IMR-90 (cell line): ENCODE measurements at regions of chr20 and their contacts with region 1.

Region 1: DNA sequence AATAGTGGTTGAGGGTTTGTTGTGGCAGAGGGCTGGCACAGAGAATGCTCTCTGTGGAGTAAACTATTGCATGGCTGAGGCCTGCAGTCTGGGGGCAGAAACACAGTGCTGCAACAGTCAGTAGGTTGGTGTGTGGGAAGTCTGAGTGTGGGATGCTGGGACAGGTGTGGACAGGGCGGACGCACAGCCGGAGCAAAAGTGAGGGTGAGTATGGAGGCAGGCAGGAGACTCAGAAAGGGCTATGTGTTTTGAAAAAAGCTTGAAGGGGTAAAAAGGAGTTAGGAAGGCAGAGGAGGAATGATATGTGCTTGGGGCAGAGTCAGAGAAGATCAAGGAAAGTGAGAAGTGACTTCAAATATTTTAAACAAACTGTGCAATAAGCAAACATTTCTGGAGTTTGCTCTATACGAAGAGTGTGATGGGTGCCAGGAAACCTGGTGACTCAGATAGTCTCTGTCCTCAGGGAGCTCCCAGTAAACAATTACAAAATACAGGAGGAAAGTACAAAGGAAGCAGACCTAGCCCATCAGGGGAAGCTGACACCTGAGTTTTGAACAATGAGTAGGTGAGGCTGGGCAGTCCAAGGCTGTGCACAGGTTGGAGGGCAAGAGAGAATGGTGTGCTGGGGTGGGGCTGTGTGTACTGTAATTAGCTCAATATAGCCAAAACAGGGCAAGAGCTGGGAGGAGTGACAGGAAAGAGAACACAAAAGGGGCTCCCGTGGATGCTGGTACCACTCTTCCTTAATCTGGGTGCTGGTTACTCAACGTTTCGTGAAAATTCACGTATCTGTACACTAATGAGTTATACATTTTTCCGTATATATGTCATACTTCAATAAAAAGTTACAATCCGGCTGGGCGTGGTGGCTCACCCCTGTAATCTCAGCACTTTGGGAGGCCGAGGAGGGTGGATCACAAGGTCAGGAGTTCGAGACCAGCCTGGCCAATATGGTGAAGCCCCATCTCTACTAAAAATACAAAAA is 55.2 kb downstream of the PIGU start:
- DNase-seq: peak; percentile 64
- ATAC-seq: peak; percentile 81
- H3K4me3 ChIP-seq: no peak overlapping the region
- H3K27ac ChIP-seq: no peak overlapping the region
- H3K4me1 ChIP-seq: peaks cover 6% of the 10 kb centered on the region
- H3K27me3 ChIP-seq: no peaks in the 10 kb centered on the region
- CTCF ChIP-seq: no peak
- POLR2A ChIP-seq: no peak
- RAD21 ChIP-seq: no peak

Region 2: GRCh38 chr20:34516247-34517113 is 105.2 kb before region 1 on chr20 and contains the start of gene DYNLRB1:
- CTCF ChIA-PET with region 1: no interaction called
- POLR2A ChIA-PET with region 1: no interaction called
- dilution Hi-C with region 1: no loop called
- in situ Hi-C with region 1: no loop called
- intact Hi-C with region 1: no loop called
- DNase-seq: peak; percentile 96
- ATAC-seq: peak; percentile 89
- H3K4me3 ChIP-seq: peak within 1 kb of the TSS; percentile 89
- H3K27ac ChIP-seq: peak within 1 kb of the TSS; percentile 95
- H3K4me1 ChIP-seq: peaks cover 7% of the 10 kb centered on the region; the same call in 1 of the 2 replicates
- H3K27me3 ChIP-seq: no peaks in the 10 kb centered on the region
- CTCF ChIP-seq: no peak
- POLR2A ChIP-seq: peak; percentile 90
- RAD21 ChIP-seq: no peak
- total RNA-seq, gene DYNLRB1: 78.0 and 82.4 TPM in 2 replicates

Region 3: DNA sequence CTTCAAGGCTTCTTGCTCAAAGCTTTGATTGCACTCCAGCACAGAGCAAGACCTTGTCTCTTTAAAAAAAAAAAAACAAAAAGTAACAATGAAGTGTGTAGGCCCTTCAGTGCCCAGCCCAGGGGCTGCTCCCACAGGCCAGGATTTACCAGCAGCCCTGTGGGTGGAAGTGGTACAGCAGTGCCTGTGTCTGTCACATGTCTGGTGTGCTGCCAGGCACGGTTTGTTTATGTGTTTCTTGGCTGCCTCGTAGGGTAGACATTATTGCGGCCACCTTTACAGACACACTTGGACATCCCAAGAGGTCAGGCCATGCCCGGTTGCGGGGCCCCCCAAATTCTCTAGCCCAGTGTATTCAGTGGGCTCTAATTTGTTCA is 92.8 kb before region 1 on chr20:
- CTCF ChIA-PET with region 1: no interaction called
- POLR2A ChIA-PET with region 1: no interaction called
- dilution Hi-C with region 1: no loop called
- in situ Hi-C with region 1: no loop called
- intact Hi-C with region 1: no loop called
- DNase-seq: no peak
- ATAC-seq: no peak
- H3K4me3 ChIP-seq: no peak overlapping the region
- H3K27ac ChIP-seq: peak overlapping the region; percentile 17; the same call in 1 of the 2 replicates
- H3K4me1 ChIP-seq: peaks cover 30% of the 10 kb centered on the region
- H3K27me3 ChIP-seq: no peaks in the 10 kb centered on the region
- CTCF ChIP-seq: no peak
- POLR2A ChIP-seq: no peak
- RAD21 ChIP-seq: no peak

Region 4: GRCh38 chr20:34676642-34677373 is 55.1 kb after region 1 on chr20 and contains the start of gene PIGU:
- CTCF ChIA-PET with region 1: no interaction called
- POLR2A ChIA-PET with region 1: no interaction called
- dilution Hi-C with region 1: no loop called
- in situ Hi-C with region 1: no loop called
- intact Hi-C with region 1: no loop called
- DNase-seq: peak; percentile 92
- ATAC-seq: peak; percentile 99
- H3K4me3 ChIP-seq: peak within 1 kb of the TSS; percentile 77
- H3K27ac ChIP-seq: peak within 1 kb of the TSS; percentile 54; the same call in 1 of the 2 replicates
- H3K4me1 ChIP-seq: 0 out of 2 replicates have a peak, but pooled peaks cover 2% of the 10 kb centered on the region
- H3K27me3 ChIP-seq: no peaks in the 10 kb centered on the region
- CTCF ChIP-seq: no peak; the same call in 1 of the 2 replicates
- POLR2A ChIP-seq: 0 out of 2 replicates have a peak, but pooled peaks have one; percentile 43
- RAD21 ChIP-seq: no peak
- total RNA-seq, gene PIGU: 11.1 and 16.1 TPM in 2 replicates

Region 5: GRCh38 chr20:34689486-34689885 is 67.8 kb after region 1 on chr20:
- CTCF ChIA-PET with region 1: interaction called, 12 read pairs
- POLR2A ChIA-PET with region 1: no interaction called
- dilution Hi-C with region 1: no loop called
- in situ Hi-C with region 1: no loop called
- intact Hi-C with region 1: no loop called
- DNase-seq: no peak
- ATAC-seq: peak; percentile 21; the same call in 1 of the 2 replicates
- H3K4me3 ChIP-seq: no peak overlapping the region
- H3K27ac ChIP-seq: no peak overlapping the region
- H3K4me1 ChIP-seq: no peaks in the 10 kb centered on the region
- H3K27me3 ChIP-seq: no peaks in the 10 kb centered on the region
- CTCF ChIP-seq: no peak
- POLR2A ChIP-seq: no peak
- RAD21 ChIP-seq: no peak

Region 6: GRCh38 chr20:34891166-34892062 is 269.7 kb after region 1 on chr20:
- CTCF ChIA-PET with region 1: no interaction called
- POLR2A ChIA-PET with region 1: no interaction called
- dilution Hi-C with region 1: no loop called
- in situ Hi-C with region 1: no loop called
- intact Hi-C with region 1: no loop called
- DNase-seq: peak; percentile 88
- ATAC-seq: peak; percentile 64
- H3K4me3 ChIP-seq: no peak overlapping the region
- H3K27ac ChIP-seq: no peak overlapping the region
- H3K4me1 ChIP-seq: peaks cover 14% of the 10 kb centered on the region
- H3K27me3 ChIP-seq: no peaks in the 10 kb centered on the region
- CTCF ChIP-seq: no peak
- POLR2A ChIP-seq: no peak
- RAD21 ChIP-seq: no peak